Psoas muscle (tissue), 8 donors: ENCODE measurements at regions of chr7 and their contacts with region 1.

Region 1: GRCh38 chr7:1193593-1194424 is 33.8 kb upstream of the ZFAND2A start:
- DNase-seq: peak in 1 of 2 donors; percentile 46
- ATAC-seq: peak; percentile 80 to 88 (median 84)
- H3K4me3 ChIP-seq: no peak overlapping the region
- H3K27ac ChIP-seq: no peak overlapping the region
- H3K4me1 ChIP-seq: no peaks in the 10 kb centered on the region
- H3K27me3 ChIP-seq: peaks cover 0 to 53% (median 3%) of the 10 kb centered on the region in 3 donors
- CTCF ChIP-seq: peak; percentile 55

Region 2: DNA sequence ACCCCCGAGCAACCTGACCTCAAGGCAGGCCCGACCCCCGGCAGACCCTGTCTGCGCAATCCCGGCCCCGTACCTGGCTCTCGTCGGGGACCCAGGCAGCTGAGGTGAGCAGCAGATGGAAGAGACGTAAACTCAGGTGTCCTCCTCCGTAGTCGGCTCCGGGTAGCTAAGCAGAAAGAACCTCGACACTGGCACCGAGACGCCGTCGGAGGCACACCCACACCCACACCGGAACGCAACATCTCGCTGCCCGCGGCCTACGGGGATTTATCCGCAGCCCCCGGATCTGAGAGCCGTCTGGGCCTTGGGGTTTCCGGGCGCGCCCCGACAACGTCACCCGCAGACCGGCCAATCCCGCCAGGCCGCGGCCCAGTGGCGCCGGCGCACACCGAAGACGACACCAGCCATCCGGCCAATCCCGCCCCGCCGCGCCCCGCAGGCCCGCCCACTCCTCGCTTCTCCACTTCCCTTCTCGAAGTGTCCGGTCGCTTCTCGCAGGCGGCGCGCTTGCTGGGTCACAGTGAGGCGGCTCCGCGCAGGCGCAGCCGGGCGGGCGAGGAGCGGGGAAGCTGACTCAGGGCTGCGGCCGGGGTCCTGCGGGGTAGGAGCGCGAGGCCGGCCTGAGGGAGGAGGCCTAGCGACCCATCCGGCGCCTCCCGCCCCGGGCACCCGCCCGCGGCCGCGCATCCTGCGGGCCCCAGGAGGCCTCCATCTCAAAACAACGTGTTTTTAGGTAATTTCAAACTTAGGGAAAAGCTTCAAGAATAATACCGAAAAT is 33.7 kb before region 1 on chr7 and contains the start of gene ZFAND2A:
- intact Hi-C with region 1: no loop called
- DNase-seq: peak; percentile 99 to 100
- ATAC-seq: peak; percentile 97 to 100 (median 98)
- H3K4me3 ChIP-seq: peak within 1 kb of the TSS; percentile 85
- H3K27ac ChIP-seq: peak within 1 kb of the TSS; percentile 96
- H3K4me1 ChIP-seq: peaks cover 14% of the 10 kb centered on the region
- H3K27me3 ChIP-seq: no peaks in the 10 kb centered on the region
- CTCF ChIP-seq: no peak
- total RNA-seq, gene ZFAND2A: 5.7 to 18.4 (median 8.9) TPM

Region 3: DNA sequence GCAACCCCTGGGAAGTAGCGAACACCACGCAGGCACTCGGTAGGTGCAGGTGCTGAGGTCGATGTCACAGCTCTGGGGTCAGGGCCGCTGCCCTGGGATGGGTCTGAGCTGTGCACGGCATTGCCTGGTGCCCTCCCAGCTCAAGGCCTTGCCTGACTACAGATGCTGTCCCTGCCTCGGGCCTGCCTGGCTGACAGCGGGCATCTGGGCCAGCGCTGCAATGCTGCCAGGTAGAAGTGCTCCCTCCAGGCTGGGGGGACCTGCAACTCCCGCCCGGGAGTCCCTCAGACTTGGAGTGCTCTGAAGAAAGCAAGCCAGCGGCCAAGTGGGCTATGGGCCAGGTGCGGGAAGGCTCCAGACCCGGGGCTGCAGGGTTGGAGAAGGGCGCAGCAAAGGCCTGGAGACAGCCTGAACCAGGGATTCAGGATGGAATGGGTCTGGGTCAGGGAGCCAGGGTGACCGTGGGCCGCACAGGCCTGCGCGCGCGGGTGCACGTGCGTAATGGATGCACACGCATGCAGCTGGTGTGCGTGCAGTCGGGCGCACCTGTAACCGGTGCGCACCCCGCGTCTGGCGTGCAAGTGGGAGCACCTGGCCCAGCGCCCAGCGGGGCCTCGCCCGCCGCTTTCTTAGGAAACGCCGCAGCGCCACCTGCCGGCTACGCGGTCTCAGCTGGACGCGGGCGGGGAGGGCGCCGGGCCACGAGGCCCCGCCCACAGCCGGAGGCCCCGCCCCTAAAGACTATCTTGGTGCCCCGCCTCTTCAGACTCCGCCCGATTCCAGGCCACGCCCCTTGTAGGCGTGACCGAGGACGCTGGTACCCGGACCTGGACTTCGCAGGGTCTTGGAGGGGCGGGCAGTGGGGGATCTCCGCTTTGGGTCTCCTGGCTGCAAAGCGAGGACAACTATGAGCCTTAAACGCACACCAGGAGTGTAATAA is 218.8 kb after region 1 on chr7:
- intact Hi-C with region 1: loop called in 1 of 2 experiments (anchors 10 kb)
- DNase-seq: peak; percentile 78 to 89
- ATAC-seq: peak; percentile 89 to 98 (median 95)
- H3K4me3 ChIP-seq: no peak overlapping the region
- H3K27ac ChIP-seq: no peak overlapping the region
- H3K4me1 ChIP-seq: no peaks in the 10 kb centered on the region
- H3K27me3 ChIP-seq: peaks cover 0 to 46% (median 7%) of the 10 kb centered on the region in 3 donors
- CTCF ChIP-seq: peak; percentile 66

Region 4: GRCh38 chr7:1422512-1423263 is 228.9 kb after region 1 on chr7:
- intact Hi-C with region 1: loop called (anchors 2 to 10 kb)
- DNase-seq: no peak
- ATAC-seq: no peak
- H3K4me3 ChIP-seq: no peak overlapping the region
- H3K27ac ChIP-seq: no peak overlapping the region
- H3K4me1 ChIP-seq: no peaks in the 10 kb centered on the region
- H3K27me3 ChIP-seq: peaks cover 0 to 44% (median 21%) of the 10 kb centered on the region in 3 donors
- CTCF ChIP-seq: no peak